ENCODE measurements at regions of chr22 and their contacts with region 1.

Region 1: GRCh38 chr22:32528984-32529982 is 54.7 kb downstream of the FBXO7 start:
- DNase-seq: peak; percentile 89 to 91
- ATAC-seq: peak; percentile 89
- H3K4me3 ChIP-seq: no peak overlapping the region
- H3K27ac ChIP-seq: no peak overlapping the region
- H3K4me1 ChIP-seq: no peaks in the 10 kb centered on the region
- H3K27me3 ChIP-seq: no peaks in the 10 kb centered on the region

Region 2: GRCh38 chr22:32430352-32430751 is 98.9 kb before region 1 on chr22:
- intact Hi-C with region 1: no loop called
- DNase-seq: no peak
- ATAC-seq: no peak
- H3K4me3 ChIP-seq: no peak overlapping the region
- H3K27ac ChIP-seq: no peak overlapping the region
- H3K4me1 ChIP-seq: no peaks in the 10 kb centered on the region
- H3K27me3 ChIP-seq: no peaks in the 10 kb centered on the region

Region 3: DNA sequence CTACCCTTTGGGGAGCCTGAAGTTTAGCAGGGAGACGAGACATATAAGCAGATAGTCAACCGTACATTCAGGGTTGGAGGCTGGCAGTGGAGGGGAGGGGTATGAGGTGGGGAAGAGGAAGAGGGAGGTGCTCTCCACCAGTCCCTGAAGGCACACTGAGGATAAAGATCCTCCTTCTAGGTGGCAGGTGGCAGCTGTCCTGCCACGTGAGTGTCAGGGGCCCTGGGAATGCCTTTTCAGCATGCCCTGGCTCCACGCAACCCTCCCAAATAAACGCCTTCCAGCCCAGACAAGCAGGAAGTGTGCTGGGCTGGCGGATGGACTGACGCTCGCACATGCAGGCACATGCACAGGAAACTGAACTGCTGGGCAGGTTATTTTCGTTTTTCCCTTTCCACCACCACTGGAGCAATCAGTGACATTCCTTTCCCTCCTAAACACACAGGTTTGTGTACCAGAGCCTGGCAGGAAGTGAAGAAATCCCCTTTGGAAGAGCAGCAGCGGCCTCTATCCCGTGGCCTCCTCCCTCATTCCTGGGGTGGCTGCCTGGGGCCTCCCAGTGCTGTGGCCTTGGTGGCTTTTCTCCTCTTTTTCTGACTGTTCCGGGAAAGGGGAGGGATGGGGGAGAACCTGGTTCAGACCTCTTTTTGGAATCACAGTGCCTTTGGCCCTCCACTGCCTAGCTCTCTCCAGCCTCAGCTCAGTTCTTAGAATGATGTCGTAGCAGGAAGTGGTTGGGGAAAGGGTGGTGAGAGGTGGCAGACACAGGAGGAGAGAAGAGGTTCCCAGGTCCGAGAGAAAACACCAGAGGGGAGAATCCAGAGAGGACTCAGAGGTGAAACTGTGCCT is 115.2 kb after region 1 on chr22:
- intact Hi-C with region 1: loop called in 1 of 2 experiments (anchors 10 kb)
- DNase-seq: peak; percentile 74 to 79
- ATAC-seq: peak; percentile 78
- H3K4me3 ChIP-seq: no peak overlapping the region
- H3K27ac ChIP-seq: no peak overlapping the region
- H3K4me1 ChIP-seq: no peaks in the 10 kb centered on the region
- H3K27me3 ChIP-seq: no peaks in the 10 kb centered on the region

Region 4: DNA sequence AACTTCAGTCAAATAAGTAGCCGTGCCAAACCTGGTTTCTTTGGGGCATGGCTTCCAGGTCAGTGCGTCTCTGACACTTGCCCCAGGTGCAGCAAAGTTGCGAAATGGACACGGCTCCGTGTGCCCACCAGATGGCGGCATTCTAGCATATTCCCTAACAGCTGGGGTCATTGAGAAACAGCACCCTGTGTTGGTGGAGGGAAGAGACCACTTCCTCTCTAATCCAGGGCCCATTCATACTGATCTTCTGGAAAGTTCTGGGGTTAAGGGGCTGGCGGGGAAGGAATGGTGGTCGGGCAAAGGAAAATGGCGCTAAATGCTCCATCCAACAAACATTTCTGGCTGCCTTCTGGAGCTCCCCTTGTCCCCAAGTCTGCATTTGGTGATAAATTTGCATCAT is 131.0 kb after region 1 on chr22:
- intact Hi-C with region 1: loop called in 1 of 2 experiments (anchors 5 kb)
- DNase-seq: peak; percentile 76 to 83
- ATAC-seq: peak; percentile 77
- H3K4me3 ChIP-seq: no peak overlapping the region
- H3K27ac ChIP-seq: no peak overlapping the region
- H3K4me1 ChIP-seq: no peaks in the 10 kb centered on the region
- H3K27me3 ChIP-seq: no peaks in the 10 kb centered on the region

Region 5: GRCh38 chr22:32985899-32986765 is 456.8 kb after region 1 on chr22:
- intact Hi-C with region 1: loop called in 1 of 2 experiments (anchors 5 kb)
- DNase-seq: peak in 1 of 2 donors; percentile 69
- ATAC-seq: peak; percentile 95
- H3K4me3 ChIP-seq: no peak overlapping the region
- H3K27ac ChIP-seq: no peak overlapping the region
- H3K4me1 ChIP-seq: no peaks in the 10 kb centered on the region
- H3K27me3 ChIP-seq: no peaks in the 10 kb centered on the region

Region 6: GRCh38 chr22:33000342-33001280 is 471.3 kb after region 1 on chr22:
- intact Hi-C with region 1: loop called (anchors 1 to 2 kb)
- DNase-seq: peak; percentile 60 to 86
- ATAC-seq: peak; percentile 74
- H3K4me3 ChIP-seq: no peak overlapping the region
- H3K27ac ChIP-seq: no peak overlapping the region
- H3K4me1 ChIP-seq: no peaks in the 10 kb centered on the region
- H3K27me3 ChIP-seq: no peaks in the 10 kb centered on the region

Measured in aorta (tissue), 5 donors.